ENCODE measurements at regions of chr4 and their contacts with region 1.

Region 1: DNA sequence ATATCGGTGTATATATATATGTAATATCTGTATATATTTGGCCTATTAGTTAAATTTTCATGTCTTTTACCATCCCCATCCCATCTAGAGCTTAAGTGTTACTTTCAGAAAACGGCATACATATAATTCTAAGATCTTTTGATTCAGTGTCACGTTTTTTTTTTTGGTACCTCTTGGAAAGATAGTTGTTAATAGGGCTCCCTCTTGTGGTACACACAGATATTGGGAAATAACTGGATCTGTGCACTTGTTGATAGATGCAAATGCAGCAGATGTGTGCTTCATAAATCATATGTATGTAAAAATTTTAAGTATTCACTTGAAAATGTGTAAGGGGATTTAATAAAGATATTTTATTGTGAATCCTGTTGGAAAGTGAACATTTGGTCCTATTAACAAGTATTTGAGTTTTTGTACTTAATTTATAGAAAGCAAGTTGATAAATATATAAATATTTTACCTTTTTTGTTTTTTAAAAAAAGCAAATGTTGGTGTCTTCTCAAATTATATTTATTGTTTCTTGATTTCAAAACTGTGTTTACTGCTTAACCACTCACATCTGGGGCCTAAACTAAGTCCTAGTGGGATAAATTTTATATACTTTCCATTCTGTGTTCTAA is 74.7 kb downstream of the PAQR3 start:
- DNase-seq: no peak
- ATAC-seq: peak; percentile 33
- H3K4me3 Mint-ChIP-seq: no peak overlapping the region
- H3K27ac Mint-ChIP-seq: no peak overlapping the region
- H3K4me1 Mint-ChIP-seq: peaks cover 7% of the 10 kb centered on the region
- H3K27me3 Mint-ChIP-seq: no peaks in the 10 kb centered on the region

Region 2: DNA sequence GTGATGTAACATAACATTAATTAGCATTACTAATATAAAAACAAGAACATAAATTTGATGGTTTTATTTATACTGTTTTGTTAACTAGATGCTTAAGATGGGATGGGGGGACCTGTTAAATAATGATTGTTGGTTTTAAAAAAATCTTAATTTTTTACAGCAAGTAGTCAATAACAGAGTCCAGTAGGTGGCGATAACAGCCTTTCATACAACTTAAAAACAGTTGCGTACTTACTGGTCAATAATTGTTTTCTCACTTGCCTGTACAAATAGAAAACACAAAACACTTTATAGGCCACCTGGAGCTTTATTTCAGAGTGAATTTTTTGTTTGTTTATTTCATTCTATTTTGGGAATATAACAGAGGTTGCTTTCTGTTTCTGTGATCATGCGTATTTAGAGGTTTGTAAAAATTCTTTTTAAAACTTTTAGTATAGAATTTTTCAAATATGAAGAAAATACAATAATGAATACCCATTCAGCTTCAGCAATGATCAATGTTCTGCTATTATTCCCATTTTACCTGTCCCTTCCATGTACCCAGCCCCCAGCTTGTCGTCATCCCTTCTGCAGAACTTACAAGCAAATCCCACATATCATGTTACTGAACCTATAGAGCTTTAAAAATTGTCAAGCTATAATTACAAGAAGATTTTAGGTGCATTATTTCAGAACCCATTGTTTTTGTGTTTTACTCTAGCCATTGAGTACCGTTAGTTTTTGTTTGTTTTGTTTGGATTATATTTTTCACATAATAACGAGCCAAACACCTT is 904.8 kb before region 1 on chr4:
- CTCF ChIA-PET with region 1: interaction called, 3 read pairs
- POLR2A ChIA-PET with region 1: no interaction called
- intact Hi-C with region 1: loop called in 1 of 2 experiments (anchors 2 kb)
- DNase-seq: no peak
- ATAC-seq: no peak
- H3K4me3 Mint-ChIP-seq: no peak overlapping the region
- H3K27ac Mint-ChIP-seq: no peak overlapping the region
- H3K4me1 Mint-ChIP-seq: peaks cover 12% of the 10 kb centered on the region
- H3K27me3 Mint-ChIP-seq: no peaks in the 10 kb centered on the region

Region 3: GRCh38 chr4:78056265-78057129 is 808.0 kb before region 1 on chr4:
- CTCF ChIA-PET with region 1: no interaction called
- POLR2A ChIA-PET with region 1: no interaction called
- intact Hi-C with region 1: loop called in 1 of 2 experiments (anchors 5 kb)
- DNase-seq: peak; percentile 61
- ATAC-seq: peak; percentile 76
- H3K4me3 Mint-ChIP-seq: peak overlapping the region; percentile 72
- H3K27ac Mint-ChIP-seq: no peak overlapping the region
- H3K4me1 Mint-ChIP-seq: peaks cover 24% of the 10 kb centered on the region
- H3K27me3 Mint-ChIP-seq: peaks cover 53% of the 10 kb centered on the region

Region 4: GRCh38 chr4:78592104-78592783 is 272.3 kb before region 1 on chr4:
- CTCF ChIA-PET with region 1: interaction called, 3 read pairs
- POLR2A ChIA-PET with region 1: no interaction called
- intact Hi-C with region 1: loop called in 1 of 2 experiments (anchors 5 kb)
- DNase-seq: peak; percentile 29
- ATAC-seq: no peak
- H3K4me3 Mint-ChIP-seq: no peak overlapping the region
- H3K27ac Mint-ChIP-seq: no peak overlapping the region
- H3K4me1 Mint-ChIP-seq: no peaks in the 10 kb centered on the region
- H3K27me3 Mint-ChIP-seq: no peaks in the 10 kb centered on the region

Region 5: GRCh38 chr4:78612398-78613178 is 251.9 kb before region 1 on chr4:
- CTCF ChIA-PET with region 1: interaction called, 4 read pairs
- POLR2A ChIA-PET with region 1: no interaction called
- intact Hi-C with region 1: loop called (anchors 1 kb)
- DNase-seq: peak; percentile 32
- ATAC-seq: peak; percentile 34
- H3K4me3 Mint-ChIP-seq: no peak overlapping the region
- H3K27ac Mint-ChIP-seq: no peak overlapping the region
- H3K4me1 Mint-ChIP-seq: peaks cover 34% of the 10 kb centered on the region
- H3K27me3 Mint-ChIP-seq: no peaks in the 10 kb centered on the region

Region 6: GRCh38 chr4:78644744-78645330 is 219.7 kb before region 1 on chr4:
- CTCF ChIA-PET with region 1: interaction called, 7 read pairs
- POLR2A ChIA-PET with region 1: no interaction called
- intact Hi-C with region 1: loop called in 1 of 2 experiments (anchors 1 kb)
- DNase-seq: peak; percentile 66
- ATAC-seq: peak; percentile 95
- H3K4me3 Mint-ChIP-seq: no peak overlapping the region
- H3K27ac Mint-ChIP-seq: no peak overlapping the region
- H3K4me1 Mint-ChIP-seq: peaks cover 4% of the 10 kb centered on the region
- H3K27me3 Mint-ChIP-seq: no peaks in the 10 kb centered on the region

Region 7: GRCh38 chr4:78684325-78685079 is 180.0 kb before region 1 on chr4:
- CTCF ChIA-PET with region 1: no interaction called
- POLR2A ChIA-PET with region 1: no interaction called
- intact Hi-C with region 1: no loop called
- DNase-seq: no peak
- ATAC-seq: no peak
- H3K4me3 Mint-ChIP-seq: no peak overlapping the region
- H3K27ac Mint-ChIP-seq: no peak overlapping the region
- H3K4me1 Mint-ChIP-seq: no peaks in the 10 kb centered on the region
- H3K27me3 Mint-ChIP-seq: no peaks in the 10 kb centered on the region

Measured in activated CD4-positive, alpha-beta T cell treated with anti-CD3 and anti-CD28 coated beads for 36 hours (primary cell).